Right ventricle myocardium inferior (tissue), 1 donor: ENCODE measurements at regions of chr15 and their contacts with region 1.

Region 1: GRCh38 chr15:101489236-101489632 is 273 bp downstream of the PCSK6 start:
- DNase-seq: no peak
- ATAC-seq: peak; percentile 53

Region 2: GRCh38 chr15:101138913-101139880 is 350.0 kb before region 1 on chr15:
- intact Hi-C with region 1: no loop called
- DNase-seq: no peak
- ATAC-seq: no peak

Region 3: DNA sequence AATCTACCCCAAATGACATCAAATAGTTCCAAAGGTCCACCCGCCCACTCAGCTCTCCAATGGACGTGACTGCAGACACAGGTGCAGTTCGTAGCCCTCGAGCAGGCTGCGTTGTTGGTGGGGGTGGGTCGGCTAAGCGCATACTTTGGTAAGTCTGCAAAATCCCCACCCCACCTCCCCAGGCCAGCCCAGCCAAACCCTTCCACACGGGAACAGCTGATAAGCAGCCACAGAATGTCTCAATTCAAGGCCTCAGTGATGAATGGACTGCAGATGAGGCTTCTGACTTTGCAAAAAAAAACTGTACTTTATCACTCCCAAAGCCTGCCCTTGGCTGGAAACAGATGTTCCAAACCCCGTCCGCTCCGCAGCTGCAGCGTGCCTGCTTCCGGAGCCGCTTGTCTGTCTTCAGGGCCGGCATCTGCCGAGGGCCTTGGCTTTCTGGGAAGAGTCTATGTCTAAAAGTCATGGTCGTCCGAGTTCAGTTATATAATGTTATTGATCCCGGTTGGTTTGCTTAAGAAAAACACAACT is 37.9 kb before region 1 on chr15:
- intact Hi-C with region 1: loop called (anchors 5 kb)
- DNase-seq: peak; percentile 90
- ATAC-seq: peak; percentile 75

Region 4: GRCh38 chr15:101540480-101541239 is 51.4 kb after region 1 on chr15:
- intact Hi-C with region 1: no loop called
- DNase-seq: no peak
- ATAC-seq: peak; percentile 64